Endothelial cell of umbilical vein (primary cell): ENCODE measurements at regions of chr1 and their contacts with region 1.

Region 1: DNA sequence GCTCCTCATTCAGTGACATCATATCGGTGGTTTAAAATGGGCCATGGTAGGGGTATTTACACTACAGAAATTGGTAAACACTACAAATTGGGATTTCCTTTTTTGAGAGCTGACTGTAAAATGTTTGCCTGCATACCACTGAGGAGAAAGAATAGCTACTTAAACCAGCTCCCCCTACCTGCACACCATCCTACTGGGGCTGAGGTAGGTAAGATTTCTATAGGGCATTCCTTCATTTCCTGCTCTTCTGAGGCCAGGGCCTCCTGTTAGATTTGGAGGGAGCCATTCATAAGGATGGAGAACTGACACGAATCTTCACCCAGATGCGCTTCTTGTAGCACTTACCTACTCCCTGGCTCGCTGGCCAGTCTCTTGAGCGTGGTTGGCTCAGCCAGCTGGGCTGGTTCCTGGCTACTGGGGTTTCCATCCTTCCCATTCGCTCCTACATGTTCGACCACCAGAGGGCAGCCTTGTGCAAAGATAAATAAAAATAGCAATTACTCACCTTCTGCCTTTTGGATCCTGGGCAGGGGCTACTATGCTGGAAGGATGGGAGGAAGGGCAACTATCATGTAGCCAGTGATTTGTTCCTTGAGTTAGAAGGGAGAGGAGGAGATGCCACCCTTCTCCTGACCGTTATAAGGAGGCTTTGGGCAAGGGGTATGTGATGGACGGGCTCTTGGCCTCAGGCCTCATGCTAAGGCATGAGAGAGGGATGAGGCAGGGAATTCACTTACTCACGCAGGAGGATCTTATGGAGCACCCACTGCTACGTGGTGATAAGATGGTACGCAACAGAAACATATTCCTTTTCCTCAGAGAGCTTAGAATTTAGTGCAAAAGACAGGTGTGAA is 10.7 kb downstream of the OPTC start:
- DNase-seq: peak; percentile 73
- H3K4me3 ChIP-seq: no peak overlapping the region
- H3K27ac ChIP-seq: no peak overlapping the region
- H3K4me1 ChIP-seq: peaks cover 4% of the 10 kb centered on the region
- H3K27me3 ChIP-seq: peaks cover 0 to 3% of the 10 kb centered on the region in 2 experiments
- CTCF ChIP-seq: peak; percentile 70 to 75
- POLR2A ChIP-seq: no peak

Region 2: GRCh38 chr1:203381151-203381751 is 123.4 kb before region 1 on chr1:
- CTCF ChIA-PET with region 1: no interaction called
- POLR2A ChIA-PET with region 1: no interaction called
- dilution Hi-C with region 1: no loop called
- intact Hi-C with region 1: no loop called
- DNase-seq: peak; percentile 86
- H3K4me3 ChIP-seq: no peak overlapping the region
- H3K27ac ChIP-seq: no peak overlapping the region
- H3K4me1 ChIP-seq: no peaks in the 10 kb centered on the region
- H3K27me3 ChIP-seq: peaks cover 31 to 39% of the 10 kb centered on the region in 2 experiments
- CTCF ChIP-seq: no peak
- POLR2A ChIP-seq: no peak

Region 3: GRCh38 chr1:203492748-203493130 is 11.9 kb before region 1 on chr1:
- CTCF ChIA-PET with region 1: interaction called, 11 read pairs
- POLR2A ChIA-PET with region 1: no interaction called
- dilution Hi-C with region 1: no loop called
- intact Hi-C with region 1: no loop called
- DNase-seq: no peak
- H3K4me3 ChIP-seq: no peak overlapping the region
- H3K27ac ChIP-seq: no peak overlapping the region
- H3K4me1 ChIP-seq: no peaks in the 10 kb centered on the region
- H3K27me3 ChIP-seq: peaks cover 8 to 10% of the 10 kb centered on the region in 2 experiments
- CTCF ChIP-seq: no peak
- POLR2A ChIP-seq: no peak

Region 4: GRCh38 chr1:203638950-203639349 is 134.3 kb after region 1 on chr1:
- CTCF ChIA-PET with region 1: interaction called, 7 read pairs
- POLR2A ChIA-PET with region 1: no interaction called
- dilution Hi-C with region 1: no loop called
- intact Hi-C with region 1: loop called (anchors 1 kb)
- DNase-seq: peak; percentile 65
- H3K4me3 ChIP-seq: no peak overlapping the region
- H3K27ac ChIP-seq: no peak overlapping the region
- H3K4me1 ChIP-seq: peaks cover 27% of the 10 kb centered on the region
- H3K27me3 ChIP-seq: no peaks in the 10 kb centered on the region
- CTCF ChIP-seq: no peak
- POLR2A ChIP-seq: no peak

Region 5: DNA sequence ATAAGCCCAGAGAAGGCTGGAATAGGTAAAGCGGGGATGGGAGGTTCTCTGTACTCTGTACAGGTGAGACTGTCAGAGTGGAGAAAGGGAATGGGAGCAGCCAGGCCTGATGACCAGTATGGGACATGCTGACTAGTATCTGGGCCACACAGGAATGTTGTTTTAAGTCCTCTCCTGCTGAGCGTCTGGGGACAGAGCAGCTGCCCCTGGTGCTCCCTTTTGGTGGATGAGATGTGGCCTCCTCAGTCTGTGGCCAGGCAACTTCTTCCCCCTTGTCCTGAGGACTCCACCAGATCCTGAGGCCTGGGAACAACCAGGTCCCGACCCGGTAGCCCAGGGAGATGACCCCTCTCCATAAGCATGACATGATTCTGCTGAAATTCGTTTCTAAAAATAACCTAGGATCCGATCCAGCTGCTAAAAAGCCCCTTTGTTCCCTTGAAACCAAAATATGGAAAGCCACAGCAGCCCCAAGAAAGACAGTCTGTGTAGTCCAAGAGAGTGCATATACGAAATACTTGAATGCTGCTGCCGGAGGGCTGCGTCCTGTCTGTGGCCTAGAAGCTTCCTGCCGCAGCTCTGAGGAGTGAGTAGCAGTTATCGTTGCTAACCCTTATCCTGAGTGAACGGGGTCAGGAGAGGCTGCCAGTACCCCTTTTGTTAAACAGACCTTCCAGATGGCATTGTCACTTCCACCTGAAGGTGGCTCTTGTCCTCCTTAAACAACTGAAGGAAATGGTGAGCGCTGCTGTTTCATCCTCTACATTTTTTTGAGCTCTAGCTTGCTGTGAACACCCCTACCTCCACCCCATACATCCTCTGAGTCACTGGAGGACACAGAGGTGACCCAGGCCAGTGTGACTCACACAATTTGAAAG is 169.2 kb after region 1 on chr1:
- CTCF ChIA-PET with region 1: interaction called, 7 read pairs
- POLR2A ChIA-PET with region 1: no interaction called
- dilution Hi-C with region 1: no loop called
- intact Hi-C with region 1: loop called (anchors 1 kb)
- DNase-seq: peak; percentile 97
- H3K4me3 ChIP-seq: no peak overlapping the region
- H3K27ac ChIP-seq: peak overlapping the region; percentile 88
- H3K4me1 ChIP-seq: peaks cover 41% of the 10 kb centered on the region
- H3K27me3 ChIP-seq: no peaks in the 10 kb centered on the region
- CTCF ChIP-seq: no peak
- POLR2A ChIP-seq: no peak

Region 6: DNA sequence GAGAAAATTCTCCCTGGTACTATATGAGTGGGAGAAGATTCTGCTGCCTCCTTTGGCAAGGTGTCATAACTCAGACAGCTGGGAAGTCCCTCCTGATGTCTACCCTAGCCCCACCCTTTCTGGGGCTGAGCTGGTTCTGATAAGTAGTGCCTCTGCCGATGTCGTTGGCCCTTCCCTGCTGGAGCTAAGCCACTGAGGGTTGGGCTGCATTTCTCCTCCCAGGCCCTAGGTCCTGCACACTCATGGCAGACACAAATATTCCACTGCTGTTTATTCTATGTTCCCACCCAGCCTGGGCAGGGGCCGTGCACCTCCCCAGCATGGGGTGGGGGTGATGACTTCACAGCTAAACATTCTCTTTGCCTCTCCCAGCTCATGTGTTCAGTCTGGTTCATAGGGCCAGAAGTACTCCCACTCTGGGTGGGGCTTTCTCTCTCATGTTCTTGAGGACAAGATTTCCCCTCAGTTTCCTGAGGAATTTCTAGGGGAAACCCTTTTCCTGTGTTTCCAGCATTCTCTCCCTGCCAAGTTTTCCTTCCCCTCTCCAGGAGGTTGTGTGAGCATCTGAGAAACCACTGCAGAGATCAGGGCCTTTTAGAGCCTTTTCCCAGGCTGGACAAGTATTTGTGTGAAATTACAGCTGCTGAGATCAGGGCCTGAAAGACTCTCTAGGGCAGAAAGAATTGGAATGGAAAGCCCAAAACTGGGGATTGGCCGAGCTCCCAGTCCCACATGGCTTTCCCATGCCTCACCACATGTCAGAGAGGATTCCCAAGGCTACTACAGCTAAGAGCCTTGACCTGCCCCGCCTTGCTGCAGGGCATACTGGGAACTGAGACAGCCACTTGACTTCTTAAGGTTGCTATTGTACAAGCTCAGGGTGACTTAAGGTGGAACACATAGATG is 188.2 kb after region 1 on chr1:
- CTCF ChIA-PET with region 1: interaction called, 13 read pairs
- POLR2A ChIA-PET with region 1: interaction called, 4 read pairs
- dilution Hi-C with region 1: no loop called
- intact Hi-C with region 1: no loop called
- DNase-seq: peak; percentile 88
- H3K4me3 ChIP-seq: no peak overlapping the region
- H3K27ac ChIP-seq: peak overlapping the region; percentile 48
- H3K4me1 ChIP-seq: peaks cover 20% of the 10 kb centered on the region
- H3K27me3 ChIP-seq: no peaks in the 10 kb centered on the region
- CTCF ChIP-seq: no peak
- POLR2A ChIP-seq: no peak